Sigmoid colon (tissue), 7 donors: ENCODE measurements at regions of chr9 and their contacts with region 1.

Region 1: GRCh38 chr9:119004620-119004994 is 364.6 kb downstream of the BRINP1 start:
- DNase-seq: peak; percentile 90
- H3K4me3 ChIP-seq: no peak overlapping the region
- H3K27ac ChIP-seq: peak overlapping the region; percentile 68 to 79 (median 72)
- H3K4me1 ChIP-seq: peaks cover 0 to 37% (median 28%) of the 10 kb centered on the region in 4 donors
- H3K27me3 ChIP-seq: no peaks in the 10 kb centered on the region
- CTCF ChIP-seq: no peak
- EP300 ChIP-seq: no peak
- POLR2A ChIP-seq: no peak

Region 2: DNA sequence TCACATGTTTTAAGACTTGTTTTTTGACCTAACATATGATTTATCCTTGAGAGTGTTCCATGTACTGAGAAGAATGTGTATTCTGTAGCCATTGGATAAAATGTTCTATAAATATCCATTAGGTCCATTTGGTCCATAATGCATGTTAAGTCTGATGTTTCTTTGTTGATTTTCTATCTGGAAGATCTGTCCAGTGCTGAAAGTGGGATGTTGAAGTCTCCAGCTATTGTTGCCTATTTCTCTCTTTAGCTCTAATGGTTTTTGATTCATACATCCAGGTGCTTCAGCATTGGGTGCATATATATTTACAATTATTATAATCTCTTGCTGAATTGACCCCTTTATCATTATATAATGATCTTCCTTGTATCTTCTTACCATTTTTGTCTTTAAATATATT is 86.4 kb before region 1 on chr9:
- intact Hi-C with region 1: no loop called
- DNase-seq: no peak
- H3K4me3 ChIP-seq: no peak overlapping the region
- H3K27ac ChIP-seq: no peak overlapping the region
- H3K4me1 ChIP-seq: no peaks in the 10 kb centered on the region
- H3K27me3 ChIP-seq: no peaks in the 10 kb centered on the region
- CTCF ChIP-seq: no peak
- EP300 ChIP-seq: no peak
- POLR2A ChIP-seq: no peak

Region 3: DNA sequence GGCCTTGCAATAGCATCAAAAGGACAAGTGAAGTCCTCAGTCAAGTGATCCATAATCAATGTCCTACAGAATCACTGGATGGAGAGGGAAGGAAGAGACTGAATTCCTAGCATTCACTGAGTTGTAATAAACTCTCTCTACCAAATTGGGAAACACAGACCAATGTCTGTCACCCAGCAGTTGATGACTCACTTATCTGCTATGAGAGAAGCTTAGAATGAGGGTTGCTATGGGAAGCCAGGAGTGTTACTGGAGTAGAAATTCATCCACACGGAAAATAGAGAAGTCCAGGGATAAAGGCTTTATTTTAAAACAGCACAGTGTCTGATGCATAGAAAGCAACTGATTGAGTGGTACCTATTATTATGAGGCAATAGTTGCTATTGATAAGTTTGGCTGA is 42.8 kb before region 1 on chr9:
- intact Hi-C with region 1: loop called (anchors 5 kb)
- DNase-seq: no peak
- H3K4me3 ChIP-seq: no peak overlapping the region
- H3K27ac ChIP-seq: peak overlapping the region; percentile 27 to 70 (median 53)
- H3K4me1 ChIP-seq: peaks cover 0 to 27% (median 15%) of the 10 kb centered on the region in 4 donors
- H3K27me3 ChIP-seq: no peaks in the 10 kb centered on the region
- CTCF ChIP-seq: no peak
- EP300 ChIP-seq: no peak
- POLR2A ChIP-seq: no peak